Activated T-helper 1 cell treated with anti-CD3 and anti-CD28 coated beads, Interleukin-12 subunit alpha, Interleukin-12 subunit beta, Interleukin-2, Interleukin-4 antibody, amounts not matched to agents 30 ng/mL and 10 ng/mL and 1 ng/mL, durations not matched to agents 14 hours and 24 hours and 36 hours (primary cell): ENCODE measurements at regions of chr2 and their contacts with region 1.

Region 1: DNA sequence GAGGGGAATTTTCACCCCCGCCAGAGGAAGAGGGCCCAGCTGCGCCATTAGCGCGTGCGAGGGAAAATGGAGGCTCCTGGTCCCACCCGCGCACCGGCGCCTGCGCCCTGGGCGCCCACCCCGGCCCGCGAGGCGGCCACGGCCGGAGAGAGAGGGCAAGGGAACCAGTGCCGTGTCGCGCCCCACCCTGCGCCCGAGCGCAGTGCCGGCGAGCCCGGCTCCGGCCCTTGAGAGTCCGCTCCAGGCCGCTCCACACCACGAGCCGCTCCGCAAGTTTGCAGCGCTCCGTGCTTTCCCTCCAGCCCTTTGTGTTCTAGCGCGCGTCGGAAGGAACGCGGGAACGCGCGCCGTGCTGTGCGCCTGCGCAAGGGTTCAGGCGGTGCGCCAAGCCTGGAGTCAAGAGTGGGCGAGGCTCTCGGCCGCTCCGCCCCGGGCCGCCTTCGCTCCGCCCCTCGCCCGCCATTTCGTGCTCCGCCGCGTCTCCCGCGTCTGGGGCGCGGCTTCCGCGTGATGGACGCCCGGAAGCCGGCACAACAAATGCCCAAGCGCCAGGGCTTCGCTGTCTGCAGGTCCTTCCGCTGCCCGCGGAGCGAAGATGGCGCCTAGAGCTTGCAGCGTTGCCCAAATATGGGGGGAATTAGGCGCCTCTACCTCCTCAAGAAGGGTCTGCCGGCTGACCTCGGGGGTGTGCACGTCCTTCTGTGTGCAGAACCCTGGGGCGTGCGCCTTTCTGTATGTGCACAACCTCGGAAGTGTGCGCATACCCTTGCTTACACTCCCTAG is 46.1 kb upstream of the PTMA start:
- DNase-seq: peak; percentile 98
- H3K4me3 Mint-ChIP-seq: peak overlapping the region; percentile 74
- H3K27ac Mint-ChIP-seq: peak overlapping the region; percentile 96
- H3K4me1 Mint-ChIP-seq: peaks cover 25% of the 10 kb centered on the region
- H3K27me3 Mint-ChIP-seq: no peaks in the 10 kb centered on the region

Region 2: GRCh38 chr2:231642631-231643494 is 19.4 kb before region 1 on chr2:
- intact Hi-C with region 1: loop called (anchors 1 kb)
- DNase-seq: peak; percentile 76
- H3K4me3 Mint-ChIP-seq: peak overlapping the region; percentile 74
- H3K27ac Mint-ChIP-seq: peak overlapping the region; percentile 95
- H3K4me1 Mint-ChIP-seq: peaks cover 37% of the 10 kb centered on the region
- H3K27me3 Mint-ChIP-seq: no peaks in the 10 kb centered on the region

Region 3: GRCh38 chr2:231674587-231675338 is 12.5 kb after region 1 on chr2:
- intact Hi-C with region 1: loop called (anchors 1 kb)
- DNase-seq: peak; percentile 55
- H3K4me3 Mint-ChIP-seq: peak overlapping the region; percentile 15
- H3K27ac Mint-ChIP-seq: peak overlapping the region; percentile 26
- H3K4me1 Mint-ChIP-seq: peaks cover 22% of the 10 kb centered on the region
- H3K27me3 Mint-ChIP-seq: no peaks in the 10 kb centered on the region

Region 4: GRCh38 chr2:231706731-231707624 is 44.8 kb after region 1 on chr2:
- intact Hi-C with region 1: loop called (anchors 1 kb)
- DNase-seq: peak; percentile 96
- H3K4me3 Mint-ChIP-seq: peak overlapping the region; percentile 99
- H3K27ac Mint-ChIP-seq: peak overlapping the region; percentile 100
- H3K4me1 Mint-ChIP-seq: peaks cover 13% of the 10 kb centered on the region
- H3K27me3 Mint-ChIP-seq: peaks cover 3% of the 10 kb centered on the region

Region 5: GRCh38 chr2:232550354-232551249 is 888.4 kb after region 1 on chr2 and contains the starts of genes EIF4E2 and TIGD1:
- intact Hi-C with region 1: loop called (anchors 5 kb)
- DNase-seq: peak; percentile 90
- H3K4me3 Mint-ChIP-seq: peak within 1 kb of the TSS; percentile 100
- H3K27ac Mint-ChIP-seq: peak within 1 kb of the TSS; percentile 100
- H3K4me1 Mint-ChIP-seq: peaks cover 76% of the 10 kb centered on the region
- H3K27me3 Mint-ChIP-seq: no peaks in the 10 kb centered on the region
- total RNA-seq, gene EIF4E2: 94.3 and 96.2 TPM in 2 replicates
- total RNA-seq, gene TIGD1: 8.4 and 8.9 TPM in 2 replicates